Calu3 (cell line): ENCODE measurements at regions of chr18 and their contacts with region 1.

Region 1: GRCh38 chr18:54480616-54481015 is 110.4 kb upstream of the DYNAP start:
- DNase-seq: no peak
- H3K4me3 Mint-ChIP-seq: no peak overlapping the region
- H3K27ac Mint-ChIP-seq: no peak overlapping the region
- H3K4me1 Mint-ChIP-seq: no peaks in the 10 kb centered on the region
- H3K27me3 Mint-ChIP-seq: peaks cover 29% of the 10 kb centered on the region
- CTCF ChIP-seq: no peak

Region 2: GRCh38 chr18:54396760-54397159 is 83.9 kb before region 1 on chr18:
- CTCF ChIA-PET with region 1: no interaction called
- intact Hi-C with region 1: no loop called
- DNase-seq: no peak
- H3K4me3 Mint-ChIP-seq: no peak overlapping the region
- H3K27ac Mint-ChIP-seq: no peak overlapping the region
- H3K4me1 Mint-ChIP-seq: no peaks in the 10 kb centered on the region
- H3K27me3 Mint-ChIP-seq: no peaks in the 10 kb centered on the region
- CTCF ChIP-seq: no peak

Region 3: DNA sequence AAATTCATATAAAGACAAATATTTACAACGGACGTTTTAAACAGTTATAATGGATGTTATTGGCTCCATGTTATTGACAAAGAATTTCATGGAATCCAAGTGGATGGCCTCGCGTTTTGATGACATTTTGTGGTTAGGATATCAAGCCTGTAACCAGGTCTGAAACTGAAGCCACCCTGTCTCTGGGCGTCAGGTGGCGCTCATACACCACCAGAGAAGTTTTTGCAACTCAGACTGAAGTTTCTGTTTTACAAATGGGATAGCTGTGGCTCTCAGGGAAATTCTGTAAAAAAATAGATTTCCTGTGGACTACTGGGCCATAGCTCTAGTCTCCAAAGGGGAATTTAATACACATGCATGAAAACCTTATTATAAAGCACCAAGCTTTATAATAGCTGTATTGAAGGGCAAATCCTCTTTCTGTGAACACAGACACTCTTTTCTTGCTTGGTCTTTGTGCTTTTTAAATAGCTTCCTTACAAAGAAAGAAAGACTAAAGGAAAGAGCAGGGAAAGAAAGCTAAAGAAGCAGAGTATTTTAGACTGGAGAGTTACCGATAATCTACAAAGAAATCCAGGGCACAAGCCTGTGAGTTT is 36.2 kb before region 1 on chr18:
- CTCF ChIA-PET with region 1: no interaction called
- intact Hi-C with region 1: no loop called
- DNase-seq: peak; percentile 72
- H3K4me3 Mint-ChIP-seq: no peak overlapping the region
- H3K27ac Mint-ChIP-seq: no peak overlapping the region
- H3K4me1 Mint-ChIP-seq: no peaks in the 10 kb centered on the region
- H3K27me3 Mint-ChIP-seq: peaks cover 22% of the 10 kb centered on the region
- CTCF ChIP-seq: peak; percentile 70

Region 4: GRCh38 chr18:54532217-54532616 is 51.6 kb after region 1 on chr18:
- CTCF ChIA-PET with region 1: no interaction called
- intact Hi-C with region 1: loop called (anchors 5 kb)
- DNase-seq: peak; percentile 24
- H3K4me3 Mint-ChIP-seq: no peak overlapping the region
- H3K27ac Mint-ChIP-seq: peak overlapping the region; percentile 22
- H3K4me1 Mint-ChIP-seq: peaks cover 18% of the 10 kb centered on the region
- H3K27me3 Mint-ChIP-seq: no peaks in the 10 kb centered on the region
- CTCF ChIP-seq: no peak